Naive thymus-derived CD4-positive, alpha-beta T cell (primary cell): ENCODE measurements at regions of chr10 and their contacts with region 1.

Region 1: GRCh38 chr10:22988581-22989360 is 60.9 kb downstream of the ARMC3 start:
- DNase-seq: peak; percentile 14 to 83 (median 77)
- ATAC-seq: peak; percentile 94
- H3K4me3 ChIP-seq: no peak overlapping the region
- H3K4me3 Mint-ChIP-seq: peak overlapping the region in 4 of 10 donors; percentile 28 to 35 (median 30)
- H3K27ac ChIP-seq: no peak overlapping the region
- H3K27ac Mint-ChIP-seq: peak overlapping the region in 4 of 9 donors; percentile 17 to 65 (median 54)
- H3K4me1 ChIP-seq: peaks cover 0 to 4% of the 10 kb centered on the region in 2 donors
- H3K4me1 Mint-ChIP-seq: peaks cover 0 to 25% (median 18%) of the 10 kb centered on the region in 7 donors
- H3K27me3 ChIP-seq: no peaks in the 10 kb centered on the region
- H3K27me3 Mint-ChIP-seq: peaks cover 0 to 22% (median under 1%) of the 10 kb centered on the region in 5 donors

Region 2: GRCh38 chr10:22251751-22252223 is 737.0 kb before region 1 on chr10:
- CTCF ChIA-PET with region 1: interaction called, 3 read pairs
- POLR2A ChIA-PET with region 1: interaction called, 5 read pairs
- intact Hi-C with region 1: loop called in 1 of 2 experiments (anchors 5 kb)
- DNase-seq: peak in 8 of 9 donors; percentile 48 to 76 (median 73)
- ATAC-seq: peak; percentile 73
- H3K4me3 ChIP-seq: peak overlapping the region; percentile 82
- H3K4me3 Mint-ChIP-seq: peak overlapping the region; percentile 90 to 100 (median 94)
- H3K27ac ChIP-seq: peak overlapping the region; percentile 87
- H3K27ac Mint-ChIP-seq: peak overlapping the region; percentile 95 to 100 (median 99)
- H3K4me1 ChIP-seq: peaks cover 0 to 4% of the 10 kb centered on the region in 2 donors
- H3K4me1 Mint-ChIP-seq: peaks cover 8 to 40% (median 38%) of the 10 kb centered on the region in 7 donors
- H3K27me3 ChIP-seq: no peaks in the 10 kb centered on the region
- H3K27me3 Mint-ChIP-seq: peaks cover 8 to 31% (median 10%) of the 10 kb centered on the region in 5 donors

Region 3: DNA sequence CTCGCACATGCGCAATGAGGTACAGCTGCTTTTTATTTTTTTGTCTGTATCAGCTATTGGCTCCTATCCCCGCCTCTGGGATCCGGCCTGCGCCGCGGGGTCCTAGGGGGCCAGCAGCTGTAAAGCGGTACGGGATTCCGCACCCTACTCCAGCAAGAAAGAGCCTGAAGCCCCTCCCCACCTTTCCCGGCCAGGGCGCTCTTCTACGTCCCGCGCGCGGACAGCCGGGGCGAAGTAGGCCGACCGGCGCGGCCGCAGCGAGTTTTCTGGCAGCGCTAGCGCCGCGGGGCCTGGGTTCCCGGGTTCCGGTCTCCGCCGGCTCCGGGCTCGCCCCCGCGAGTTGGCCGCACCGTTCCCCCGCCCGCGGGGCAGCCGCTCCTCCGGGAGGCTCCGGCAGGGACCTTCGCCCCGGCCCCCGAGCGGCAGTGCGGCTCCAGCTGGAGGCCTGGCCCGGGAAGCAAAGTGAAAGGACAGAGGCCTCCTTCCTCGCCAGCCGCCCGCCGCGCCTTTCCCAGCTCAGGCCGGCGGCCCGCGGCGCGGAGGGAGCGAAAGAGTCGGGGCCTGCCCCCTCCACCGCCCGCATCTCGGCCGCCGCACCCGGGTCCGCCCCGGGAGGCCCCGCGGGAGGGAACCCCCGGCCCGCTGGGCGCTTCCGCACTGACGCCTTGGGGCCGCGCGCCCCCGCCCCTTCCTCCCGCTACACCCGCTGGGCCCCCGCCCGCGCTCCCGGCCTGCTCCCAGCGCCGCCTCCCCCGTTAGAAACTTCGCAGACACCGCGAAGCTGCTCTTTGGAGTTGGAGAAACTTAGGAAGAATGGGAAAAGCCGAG is 648.2 kb before region 1 on chr10:
- CTCF ChIA-PET with region 1: interaction called, 3 read pairs
- POLR2A ChIA-PET with region 1: interaction called, 6 read pairs
- intact Hi-C with region 1: loop called in 1 of 2 experiments (anchors 5 kb)
- DNase-seq: peak in 8 of 9 donors; percentile 41 to 80 (median 58)
- ATAC-seq: peak; percentile 59
- H3K4me3 ChIP-seq: peak overlapping the region; percentile 41
- H3K4me3 Mint-ChIP-seq: peak overlapping the region; percentile 80 to 89 (median 86)
- H3K27ac ChIP-seq: peak overlapping the region; percentile 20
- H3K27ac Mint-ChIP-seq: peak overlapping the region; percentile 56 to 93 (median 89)
- H3K4me1 ChIP-seq: peaks cover 24 to 26% of the 10 kb centered on the region in 2 donors
- H3K4me1 Mint-ChIP-seq: peaks cover 0 to 54% (median 18%) of the 10 kb centered on the region in 7 donors
- H3K27me3 ChIP-seq: peaks cover 51 to 91% of the 10 kb centered on the region in 2 donors
- H3K27me3 Mint-ChIP-seq: peaks cover 59 to 79% (median 74%) of the 10 kb centered on the region in 5 donors

Region 4: GRCh38 chr10:22573820-22574569 is 414.8 kb before region 1 on chr10:
- CTCF ChIA-PET with region 1: interaction called, 47 read pairs
- POLR2A ChIA-PET with region 1: no interaction called
- intact Hi-C with region 1: loop called (anchors 1 kb)
- DNase-seq: peak in 5 of 9 donors; percentile 16 to 26 (median 24)
- ATAC-seq: peak; percentile 67
- H3K4me3 ChIP-seq: no peak overlapping the region
- H3K4me3 Mint-ChIP-seq: peak overlapping the region in 2 of 10 donors; percentile 24 to 66
- H3K27ac ChIP-seq: no peak overlapping the region
- H3K27ac Mint-ChIP-seq: peak overlapping the region; percentile 8 to 91 (median 62)
- H3K4me1 ChIP-seq: peaks cover 0 to 33% of the 10 kb centered on the region in 2 donors
- H3K4me1 Mint-ChIP-seq: peaks cover 32 to 80% (median 62%) of the 10 kb centered on the region in 7 donors
- H3K27me3 ChIP-seq: no peaks in the 10 kb centered on the region
- H3K27me3 Mint-ChIP-seq: no peaks in the 10 kb centered on the region

Region 5: GRCh38 chr10:22648547-22648961 is 340.2 kb before region 1 on chr10:
- CTCF ChIA-PET with region 1: interaction called, 4 read pairs
- POLR2A ChIA-PET with region 1: no interaction called
- intact Hi-C with region 1: loop called in 1 of 2 experiments (anchors 2 kb)
- DNase-seq: no peak
- ATAC-seq: no peak
- H3K4me3 ChIP-seq: peak overlapping the region; percentile 37
- H3K4me3 Mint-ChIP-seq: peak overlapping the region in 9 of 10 donors; percentile 60 to 89 (median 82)
- H3K27ac ChIP-seq: peak overlapping the region; percentile 53
- H3K27ac Mint-ChIP-seq: peak overlapping the region; percentile 75 to 97 (median 93)
- H3K4me1 ChIP-seq: peaks cover 97 to 98% of the 10 kb centered on the region in 2 donors
- H3K4me1 Mint-ChIP-seq: peaks cover 79 to 96% (median 90%) of the 10 kb centered on the region in 7 donors
- H3K27me3 ChIP-seq: no peaks in the 10 kb centered on the region
- H3K27me3 Mint-ChIP-seq: no peaks in the 10 kb centered on the region